ENCODE measurements at regions of chr2 and their contacts with region 1.

Region 1: DNA sequence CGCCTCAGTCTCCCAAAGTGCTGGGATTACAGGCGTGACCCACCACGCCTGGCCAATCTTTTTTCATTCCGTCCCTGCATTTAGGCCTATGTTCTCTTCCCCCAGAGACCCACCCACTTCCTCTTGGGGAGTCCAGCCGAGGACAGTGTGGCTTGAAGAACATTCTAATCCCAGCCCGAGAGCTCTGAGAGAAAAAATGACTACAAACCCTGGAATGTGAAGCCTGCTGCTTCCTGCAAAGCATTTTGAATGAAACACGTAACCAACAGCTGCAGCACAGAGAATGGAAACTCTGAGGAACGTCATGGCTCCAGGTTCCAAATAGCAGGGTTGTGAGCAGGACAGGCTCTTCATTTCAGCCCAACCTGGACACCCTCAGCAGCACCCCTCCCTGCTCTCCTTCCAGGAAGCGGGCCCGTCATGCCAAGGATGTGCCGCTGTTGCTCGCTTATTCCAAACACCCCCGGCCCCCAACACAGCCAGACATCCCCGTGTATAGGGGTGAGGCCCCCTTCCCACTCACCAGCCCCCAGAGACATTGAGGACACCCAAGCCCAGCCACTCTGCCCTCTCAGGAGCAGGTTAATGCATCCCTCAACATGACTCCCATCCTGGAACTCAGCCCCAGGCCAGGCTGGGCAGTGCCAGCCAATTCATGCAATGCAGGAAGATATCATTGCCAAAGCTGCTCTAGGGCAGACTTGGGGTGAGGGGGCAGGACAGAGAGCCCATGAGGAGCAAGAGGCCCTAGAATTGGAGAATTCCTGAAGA is 139.8 kb downstream of the ZFP36L2 start:
- DNase-seq: peak; percentile 99
- H3K4me3 ChIP-seq: no peak overlapping the region
- H3K27ac ChIP-seq: peak overlapping the region; percentile 94
- H3K4me1 ChIP-seq: peaks cover 70% of the 10 kb centered on the region
- H3K27me3 ChIP-seq: no peaks in the 10 kb centered on the region
- CTCF ChIP-seq: no peak

Region 2: GRCh38 chr2:42906557-42907411 is 179.9 kb before region 1 on chr2:
- CTCF ChIA-PET with region 1: no interaction called
- dilution Hi-C with region 1: no loop called
- in situ Hi-C with region 1: no loop called
- intact Hi-C with region 1: no loop called
- DNase-seq: peak; percentile 33
- H3K4me3 ChIP-seq: no peak overlapping the region
- H3K27ac ChIP-seq: no peak overlapping the region
- H3K4me1 ChIP-seq: peaks cover 13% of the 10 kb centered on the region
- H3K27me3 ChIP-seq: no peaks in the 10 kb centered on the region
- CTCF ChIP-seq: no peak

Region 3: DNA sequence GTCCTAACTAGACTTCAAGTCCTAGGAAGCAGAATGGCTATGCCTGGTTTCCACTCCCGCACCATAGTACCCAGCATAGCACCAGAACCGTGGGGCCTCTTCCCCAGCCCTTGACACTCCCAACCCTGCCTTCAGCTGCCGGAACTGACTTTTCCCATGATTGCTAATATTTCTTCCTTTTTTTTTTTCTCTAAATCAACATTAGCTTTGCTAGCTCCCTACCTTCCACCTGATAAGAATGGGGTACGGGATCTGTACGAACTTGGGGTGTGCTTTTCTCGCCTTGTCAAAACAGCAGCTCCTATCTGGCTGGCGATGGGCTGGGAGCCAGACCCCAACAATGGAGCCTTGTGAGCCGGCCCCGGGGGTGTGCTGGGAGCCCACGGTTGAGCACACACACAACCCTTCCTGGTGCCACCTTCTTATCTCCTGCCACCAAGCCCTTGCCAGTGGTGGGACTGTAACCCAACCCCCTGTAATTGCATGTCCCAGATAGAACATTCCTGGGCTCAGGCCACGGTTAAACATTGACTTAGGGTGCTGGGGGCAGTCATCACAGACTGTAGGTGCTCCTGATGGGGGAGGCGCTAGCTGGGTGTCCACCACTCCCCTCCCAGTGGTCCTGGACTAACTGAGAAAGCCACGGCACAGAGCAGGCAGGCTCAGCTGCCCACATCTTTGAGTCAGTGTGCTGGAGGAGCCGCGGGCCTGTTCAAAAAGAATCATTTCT is 81.2 kb before region 1 on chr2:
- CTCF ChIA-PET with region 1: no interaction called
- dilution Hi-C with region 1: no loop called
- in situ Hi-C with region 1: no loop called
- intact Hi-C with region 1: no loop called
- DNase-seq: no peak
- H3K4me3 ChIP-seq: no peak overlapping the region
- H3K27ac ChIP-seq: no peak overlapping the region
- H3K4me1 ChIP-seq: peaks cover 4% of the 10 kb centered on the region
- H3K27me3 ChIP-seq: no peaks in the 10 kb centered on the region
- CTCF ChIP-seq: no peak

Region 4: DNA sequence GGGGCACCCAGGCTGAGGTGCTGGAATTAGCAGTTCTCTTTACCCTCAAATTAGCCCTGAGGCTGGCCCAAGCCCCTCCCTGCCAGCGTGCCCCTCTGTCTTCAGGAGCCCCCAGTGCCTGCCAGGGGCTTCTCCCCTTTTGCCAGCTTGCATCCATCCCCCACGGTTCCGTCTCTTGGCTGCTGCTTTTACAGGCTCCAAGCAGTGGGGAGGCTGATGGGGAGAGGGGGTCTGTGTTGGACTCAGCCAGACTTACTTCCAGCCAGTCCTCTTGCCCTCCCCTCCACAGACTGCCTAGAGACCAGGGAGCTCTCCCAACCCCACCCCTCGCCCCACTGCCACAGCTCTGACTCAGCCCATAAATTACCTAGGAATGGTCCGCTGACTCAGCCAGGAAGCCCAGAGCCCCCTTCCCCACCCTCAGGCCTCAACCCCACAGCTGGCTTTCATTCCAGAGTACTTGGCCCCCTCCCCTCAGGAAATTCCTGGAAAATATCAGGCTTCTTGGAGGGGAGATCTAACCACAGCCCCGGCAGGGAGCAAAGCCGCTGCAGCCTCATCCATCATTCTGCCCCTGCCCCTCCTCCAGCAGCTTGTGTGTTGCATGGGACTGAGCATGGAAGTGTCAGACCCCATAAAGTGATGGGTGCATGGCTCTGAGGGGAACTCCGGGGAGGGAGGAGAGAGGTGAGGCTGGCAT is 44.8 kb before region 1 on chr2:
- CTCF ChIA-PET with region 1: no interaction called
- dilution Hi-C with region 1: loop called (anchors 10 kb)
- in situ Hi-C with region 1: no loop called
- intact Hi-C with region 1: loop called (anchors 2 kb)
- DNase-seq: peak; percentile 88
- H3K4me3 ChIP-seq: no peak overlapping the region
- H3K27ac ChIP-seq: peak overlapping the region; percentile 82
- H3K4me1 ChIP-seq: peaks cover 51% of the 10 kb centered on the region
- H3K27me3 ChIP-seq: no peaks in the 10 kb centered on the region
- CTCF ChIP-seq: no peak

Region 5: DNA sequence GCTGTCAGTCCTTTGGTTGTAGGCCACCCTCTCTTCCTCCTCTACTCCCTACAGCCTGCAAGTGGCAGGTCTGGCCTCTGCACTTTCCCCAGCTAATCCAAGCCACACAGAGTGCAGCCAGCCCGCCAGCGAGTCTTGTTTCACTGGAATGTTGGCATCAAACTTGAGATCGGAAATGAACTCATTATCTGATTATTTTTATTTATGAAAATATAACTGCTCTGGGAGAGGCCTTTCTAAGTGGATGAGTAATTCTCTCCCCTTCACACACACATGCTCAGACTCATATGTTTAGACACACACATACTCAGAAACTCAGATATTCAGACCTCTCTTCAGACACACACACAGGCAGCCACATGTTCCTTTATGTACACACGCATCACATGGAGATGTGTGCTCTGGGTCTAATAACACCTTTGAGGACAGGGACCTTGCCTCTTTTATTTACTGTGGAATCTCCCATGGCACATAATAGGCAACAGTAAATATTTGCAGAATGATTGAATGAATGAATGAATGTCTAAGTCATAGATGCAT is 11.5 kb before region 1 on chr2:
- CTCF ChIA-PET with region 1: interaction called, 3 read pairs
- dilution Hi-C with region 1: no loop called
- in situ Hi-C with region 1: no loop called
- intact Hi-C with region 1: loop called (anchors 1 kb)
- DNase-seq: peak; percentile 96
- H3K4me3 ChIP-seq: no peak overlapping the region
- H3K27ac ChIP-seq: peak overlapping the region; percentile 90
- H3K4me1 ChIP-seq: peaks cover 34% of the 10 kb centered on the region
- H3K27me3 ChIP-seq: no peaks in the 10 kb centered on the region
- CTCF ChIP-seq: peak in 1 of 2 donors; percentile 25

Region 6: DNA sequence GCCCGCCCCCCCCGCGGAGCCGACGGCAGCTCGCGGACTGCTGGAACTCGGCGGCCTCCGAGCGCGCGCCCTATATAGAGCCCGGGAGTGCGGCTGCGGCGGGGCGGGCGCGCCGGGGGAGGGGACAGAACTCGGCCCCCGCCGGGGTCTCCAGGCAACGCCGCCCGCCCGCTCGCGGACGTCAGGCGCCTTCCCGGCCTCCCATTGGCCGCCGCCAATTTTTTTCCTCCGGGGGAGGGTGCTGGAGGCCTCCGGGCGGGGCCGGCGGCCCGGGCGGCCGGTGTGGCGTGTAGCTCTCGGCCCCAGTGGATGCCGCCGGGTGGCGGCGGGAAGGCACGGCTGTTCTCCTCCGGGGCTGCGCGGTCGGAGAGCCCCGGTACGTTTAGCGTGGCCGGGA is 139.9 kb after region 1 on chr2 and contains the start of gene ZFP36L2:
- CTCF ChIA-PET with region 1: interaction called, 3 read pairs
- dilution Hi-C with region 1: no loop called
- in situ Hi-C with region 1: no loop called
- intact Hi-C with region 1: loop called (anchors 1 kb)
- DNase-seq: peak; percentile 95
- H3K4me3 ChIP-seq: peak within 1 kb of the TSS; percentile 83 to 88 (median 86)
- H3K27ac ChIP-seq: peak within 1 kb of the TSS; percentile 88
- H3K4me1 ChIP-seq: peaks cover 29% of the 10 kb centered on the region
- H3K27me3 ChIP-seq: no peaks in the 10 kb centered on the region
- CTCF ChIP-seq: no peak
- total RNA-seq, gene ZFP36L2: 26.3 to 213 TPM